ENCODE measurements at regions of chr17 and their contacts with region 1.

Region 1: DNA sequence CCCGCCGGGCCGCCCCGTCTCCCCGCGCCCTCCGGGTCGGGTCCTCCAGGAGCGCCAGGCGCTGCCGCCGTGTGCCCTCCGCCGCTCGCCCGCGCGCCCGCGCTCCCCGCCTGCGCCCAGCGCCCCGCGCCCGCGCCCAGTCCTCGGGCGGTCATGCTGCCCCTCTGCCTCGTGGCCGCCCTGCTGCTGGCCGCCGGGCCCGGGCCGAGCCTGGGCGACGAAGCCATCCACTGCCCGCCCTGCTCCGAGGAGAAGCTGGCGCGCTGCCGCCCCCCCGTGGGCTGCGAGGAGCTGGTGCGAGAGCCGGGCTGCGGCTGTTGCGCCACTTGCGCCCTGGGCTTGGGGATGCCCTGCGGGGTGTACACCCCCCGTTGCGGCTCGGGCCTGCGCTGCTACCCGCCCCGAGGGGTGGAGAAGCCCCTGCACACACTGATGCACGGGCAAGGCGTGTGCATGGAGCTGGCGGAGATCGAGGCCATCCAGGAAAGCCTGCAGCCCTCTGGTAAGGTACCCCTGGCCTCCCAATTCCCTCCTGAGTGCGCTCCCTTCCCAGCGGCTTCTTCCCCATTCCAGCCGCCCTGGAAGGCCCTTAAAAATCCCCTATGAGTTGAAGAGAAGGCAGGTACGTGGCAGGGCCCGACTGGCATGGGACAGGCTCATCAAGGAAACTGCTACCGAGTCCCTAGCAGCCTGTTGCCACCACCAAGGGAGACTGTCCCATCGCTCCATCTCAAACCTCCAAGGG is 505 bp downstream of the IGFBP4 start:
- DNase-seq: peak; percentile 92
- ATAC-seq: peak; percentile 51

Region 2: DNA sequence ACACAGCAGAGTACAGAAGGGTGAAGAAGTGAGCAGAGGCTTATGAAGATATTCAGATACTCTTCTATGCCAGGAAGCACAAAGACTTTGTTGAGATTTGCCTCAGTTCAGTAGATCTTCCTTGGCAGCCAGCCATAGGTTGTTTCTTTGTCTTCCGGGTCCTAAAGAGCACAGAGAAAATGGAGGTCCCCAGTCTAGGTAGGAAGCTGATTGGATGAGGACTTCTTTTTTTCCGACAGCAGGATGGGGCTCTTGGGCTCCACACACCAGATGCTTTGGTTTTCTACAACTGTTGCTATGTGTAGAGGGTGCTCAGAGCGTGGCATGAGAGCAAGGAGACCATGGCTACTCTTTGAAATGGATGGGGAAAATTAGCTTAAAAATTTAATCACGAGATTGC is 164.3 kb before region 1 on chr17:
- intact Hi-C with region 1: no loop called
- DNase-seq: no peak
- ATAC-seq: no peak

Region 3: GRCh38 chr17:40303009-40303657 is 140.6 kb before region 1 on chr17:
- intact Hi-C with region 1: no loop called
- DNase-seq: no peak
- ATAC-seq: peak; percentile 71

Region 4: GRCh38 chr17:40399185-40399584 is 44.6 kb before region 1 on chr17:
- intact Hi-C with region 1: loop called (anchors 5 kb)
- DNase-seq: no peak
- ATAC-seq: peak; percentile 28

Region 5: GRCh38 chr17:40417609-40418427 is 25.9 kb before region 1 on chr17 and contains the start of gene TOP2A:
- intact Hi-C with region 1: no loop called
- DNase-seq: peak; percentile 92
- ATAC-seq: peak; percentile 99
- total RNA-seq, gene TOP2A: 3.0 TPM

Region 6: DNA sequence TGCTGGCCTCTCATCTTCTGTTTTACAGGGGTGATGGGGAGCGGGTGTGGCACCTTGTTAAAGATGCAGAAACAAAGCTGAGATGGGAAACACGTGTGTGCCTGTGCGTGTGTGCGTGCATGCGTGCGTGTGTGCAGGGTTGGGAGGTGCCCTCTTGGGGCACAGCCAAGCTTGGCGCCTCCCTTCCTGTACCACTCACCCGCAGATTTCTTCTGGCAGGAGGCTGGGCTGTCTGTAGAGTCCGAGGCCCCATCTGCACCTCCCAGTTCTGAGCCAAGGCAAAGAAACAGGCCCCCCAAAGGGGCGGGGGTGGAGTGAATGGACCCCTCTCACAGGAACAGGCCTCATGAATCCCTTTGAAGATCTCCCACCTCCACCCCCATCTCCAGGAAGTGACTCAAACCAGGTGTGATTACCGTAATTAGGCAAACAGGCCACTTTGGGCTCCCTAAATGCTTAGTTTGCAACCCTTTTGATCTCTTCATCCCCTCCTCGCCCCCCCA is 36.8 kb after region 1 on chr17:
- intact Hi-C with region 1: loop called (anchors 1 kb)
- DNase-seq: no peak
- ATAC-seq: no peak